Activated CD4-positive, alpha-beta memory T cell treated with anti-CD3 and anti-CD28 coated beads, Interleukin-2, amount 10 ng/mL, durations not matched to agents 7 days and 5 days (primary cell): ENCODE measurements at regions of chr20 and their contacts with region 1.

Region 1: GRCh38 chr20:32285621-32286371 is 8.3 kb downstream of the KIF3B start:
- DNase-seq: peak; percentile 68
- H3K4me3 Mint-ChIP-seq: peak overlapping the region; percentile 51
- H3K27ac Mint-ChIP-seq: peak overlapping the region; percentile 80
- H3K4me1 Mint-ChIP-seq: peaks cover 66% of the 10 kb centered on the region
- H3K27me3 Mint-ChIP-seq: no peaks in the 10 kb centered on the region

Region 2: GRCh38 chr20:32231847-32232246 is 53.9 kb before region 1 on chr20:
- CTCF ChIA-PET with region 1: no interaction called
- POLR2A ChIA-PET with region 1: interaction called, 16 read pairs
- DNase-seq: peak; percentile 56
- H3K4me3 Mint-ChIP-seq: no peak overlapping the region
- H3K27ac Mint-ChIP-seq: peak overlapping the region; percentile 93
- H3K4me1 Mint-ChIP-seq: peaks cover 38% of the 10 kb centered on the region
- H3K27me3 Mint-ChIP-seq: no peaks in the 10 kb centered on the region

Region 3: DNA sequence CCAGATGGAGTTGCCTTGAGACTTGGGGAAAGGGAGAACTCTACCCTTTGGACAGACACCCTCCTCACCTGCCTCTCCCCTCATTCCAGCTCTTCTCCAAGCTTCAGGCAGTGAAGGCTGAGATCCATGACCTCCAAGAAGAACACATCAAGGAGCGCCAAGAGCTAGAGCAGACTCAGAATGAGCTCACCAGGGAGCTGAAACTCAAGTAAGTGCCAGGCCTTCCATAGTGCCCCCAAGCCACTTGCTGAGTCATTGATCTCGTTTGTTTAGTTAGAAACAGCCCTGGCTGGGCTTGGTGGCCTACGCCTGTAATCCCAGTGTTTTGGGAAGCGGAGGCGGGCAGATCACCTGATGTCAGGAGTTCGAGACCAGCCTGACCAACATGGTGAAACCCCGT is 30.9 kb after region 1 on chr20:
- CTCF ChIA-PET with region 1: no interaction called
- POLR2A ChIA-PET with region 1: no interaction called
- DNase-seq: no peak
- H3K4me3 Mint-ChIP-seq: no peak overlapping the region
- H3K27ac Mint-ChIP-seq: no peak overlapping the region
- H3K4me1 Mint-ChIP-seq: peaks cover 13% of the 10 kb centered on the region
- H3K27me3 Mint-ChIP-seq: no peaks in the 10 kb centered on the region

Region 4: GRCh38 chr20:32333988-32334885 is 48.4 kb after region 1 on chr20:
- CTCF ChIA-PET with region 1: no interaction called
- POLR2A ChIA-PET with region 1: interaction called, 11 read pairs
- DNase-seq: peak; percentile 70
- H3K4me3 Mint-ChIP-seq: peak overlapping the region; percentile 50
- H3K27ac Mint-ChIP-seq: peak overlapping the region; percentile 97
- H3K4me1 Mint-ChIP-seq: peaks cover 58% of the 10 kb centered on the region
- H3K27me3 Mint-ChIP-seq: no peaks in the 10 kb centered on the region